ENCODE measurements at regions of chr18 and their contacts with region 1.

Region 1: GRCh38 chr18:62637807-62638687 is 77.3 kb upstream of the PHLPP1 start:
- DNase-seq: peak; percentile 9
- H3K4me3 ChIP-seq: no peak overlapping the region
- H3K27ac ChIP-seq: no peak overlapping the region
- H3K4me1 ChIP-seq: peaks cover 18% of the 10 kb centered on the region
- H3K27me3 ChIP-seq: no peaks in the 10 kb centered on the region
- CTCF ChIP-seq: peak; percentile 67 to 70

Region 2: DNA sequence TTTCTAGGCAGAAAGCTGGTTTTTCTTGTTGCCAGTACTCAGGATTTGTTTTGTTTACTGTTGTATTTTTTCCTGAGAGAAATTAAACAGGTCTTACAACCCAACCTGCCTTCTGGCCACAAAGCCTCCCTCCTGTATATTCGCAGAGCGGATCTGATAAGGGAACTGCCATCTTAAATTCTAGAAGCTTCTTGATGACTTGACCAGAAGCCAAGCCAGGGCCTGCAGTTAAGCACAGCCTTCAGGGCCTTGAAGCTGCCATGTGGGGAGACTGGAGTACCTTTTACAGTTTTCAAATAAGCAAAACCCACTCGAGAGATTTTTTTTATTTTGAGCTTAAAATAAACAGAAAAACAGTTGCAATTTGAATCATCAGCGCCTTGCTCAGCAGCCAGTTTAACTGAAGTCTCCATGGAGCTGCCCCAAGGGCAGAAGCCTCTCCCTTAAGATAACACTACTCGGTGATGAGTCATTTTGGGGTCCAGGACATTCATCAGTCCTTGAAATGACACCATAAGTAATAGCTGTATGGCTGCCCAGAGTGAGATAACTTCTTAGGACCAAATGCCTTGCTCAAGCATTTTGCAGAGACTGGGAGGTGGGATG is 25.8 kb after region 1 on chr18:
- CTCF ChIA-PET with region 1: no interaction called
- dilution Hi-C with region 1: no loop called
- in situ Hi-C with region 1: no loop called
- intact Hi-C with region 1: loop called (anchors 2 kb)
- DNase-seq: peak; percentile 61
- H3K4me3 ChIP-seq: no peak overlapping the region
- H3K27ac ChIP-seq: no peak overlapping the region
- H3K4me1 ChIP-seq: peaks cover 13% of the 10 kb centered on the region
- H3K27me3 ChIP-seq: no peaks in the 10 kb centered on the region
- CTCF ChIP-seq: no peak